ENCODE measurements at regions of chr5 and their contacts with region 1.

Region 1: GRCh38 chr5:69234457-69235268 is at the start of gene CDK7:
- DNase-seq: peak; percentile 96
- ATAC-seq: peak; percentile 100
- H3K4me3 Mint-ChIP-seq: peak within 1 kb of the TSS; percentile 80
- H3K27ac Mint-ChIP-seq: peak within 1 kb of the TSS; percentile 88
- H3K4me1 Mint-ChIP-seq: peaks cover 35% of the 10 kb centered on the region
- H3K27me3 Mint-ChIP-seq: no peaks in the 10 kb centered on the region
- total RNA-seq, gene CDK7: 47.0 to 47.8 TPM

Region 2: GRCh38 chr5:69189162-69190086 is 45.2 kb before region 1 on chr5 and contains the start of gene CENPH:
- CTCF ChIA-PET with region 1: interaction called, 4 read pairs
- POLR2A ChIA-PET with region 1: no interaction called
- intact Hi-C with region 1: loop called (anchors 1 kb)
- DNase-seq: peak; percentile 95
- ATAC-seq: peak; percentile 90
- H3K4me3 Mint-ChIP-seq: peak within 1 kb of the TSS; percentile 96
- H3K27ac Mint-ChIP-seq: peak within 1 kb of the TSS; percentile 99
- H3K4me1 Mint-ChIP-seq: peaks cover 8% of the 10 kb centered on the region
- H3K27me3 Mint-ChIP-seq: no peaks in the 10 kb centered on the region
- total RNA-seq, gene CENPH: 96.0 to 98.3 TPM

Region 3: DNA sequence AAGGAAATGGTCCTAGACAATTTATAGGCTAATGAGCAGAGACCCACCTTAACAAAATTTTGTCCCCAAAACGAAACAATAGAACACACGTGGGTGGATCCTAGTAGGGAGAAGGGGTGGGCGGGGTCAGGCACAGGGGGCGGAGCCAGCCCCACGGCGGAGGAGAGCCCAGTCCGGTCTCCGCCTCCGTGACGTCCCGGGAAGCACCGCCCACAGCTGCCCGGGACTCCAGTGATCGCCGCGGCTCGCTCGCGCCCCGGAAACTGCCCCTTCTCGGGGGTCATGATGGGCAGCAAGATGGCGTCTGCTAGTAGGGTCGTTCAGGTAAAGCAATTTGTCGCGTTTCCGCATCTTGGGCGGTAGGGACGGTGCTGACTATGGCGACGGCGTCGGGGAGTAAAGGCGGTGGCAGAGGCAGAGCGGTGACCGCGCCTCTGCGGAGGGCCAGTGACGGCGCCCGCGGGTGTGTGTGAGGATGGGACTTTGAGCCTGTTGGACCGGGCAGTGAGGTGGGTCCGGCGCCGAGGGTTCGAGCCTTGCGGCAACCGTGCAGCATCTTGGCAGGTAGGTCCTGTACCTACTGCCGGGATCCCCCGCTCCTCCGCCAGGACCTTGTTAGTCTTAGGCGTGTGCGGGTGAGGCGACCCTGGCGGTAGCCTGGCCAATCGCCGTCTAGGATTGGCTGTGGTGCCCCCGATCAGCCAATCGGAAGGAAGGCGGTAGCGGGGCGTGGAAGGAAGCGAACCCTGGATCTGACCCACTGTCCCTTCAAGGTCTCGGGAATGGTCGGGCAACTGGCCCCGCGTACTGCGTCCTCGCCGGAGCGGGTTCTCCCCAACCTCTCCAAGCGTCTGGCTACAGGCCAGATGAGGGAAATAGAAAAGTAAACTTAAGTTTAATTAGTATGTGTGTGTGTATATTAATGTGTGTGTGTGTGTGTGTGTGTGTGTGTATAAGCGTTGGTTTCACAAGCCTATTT is 16.8 kb before region 1 on chr5:
- CTCF ChIA-PET with region 1: interaction called, 5 read pairs
- POLR2A ChIA-PET with region 1: interaction called, 6 read pairs
- intact Hi-C with region 1: loop called (anchors 1 kb)
- DNase-seq: peak; percentile 97
- ATAC-seq: peak; percentile 93
- H3K4me3 Mint-ChIP-seq: peak overlapping the region; percentile 91
- H3K27ac Mint-ChIP-seq: peak overlapping the region; percentile 95
- H3K4me1 Mint-ChIP-seq: peaks cover 18% of the 10 kb centered on the region
- H3K27me3 Mint-ChIP-seq: no peaks in the 10 kb centered on the region

Region 4: GRCh38 chr5:69312459-69313160 is 77.9 kb after region 1 on chr5:
- CTCF ChIA-PET with region 1: no interaction called
- POLR2A ChIA-PET with region 1: no interaction called
- intact Hi-C with region 1: no loop called
- DNase-seq: no peak
- ATAC-seq: no peak
- H3K4me3 Mint-ChIP-seq: no peak overlapping the region
- H3K27ac Mint-ChIP-seq: no peak overlapping the region
- H3K4me1 Mint-ChIP-seq: peaks cover 12% of the 10 kb centered on the region
- H3K27me3 Mint-ChIP-seq: no peaks in the 10 kb centered on the region